Naive thymus-derived CD4-positive, alpha-beta T cell (primary cell): ENCODE measurements at regions of chr21 and their contacts with region 1.

Region 1: GRCh38 chr21:46323227-46324128 is at the start of gene C21orf58:
- DNase-seq: peak; percentile 96 to 99 (median 98)
- ATAC-seq: peak; percentile 90
- H3K4me3 ChIP-seq: peak within 1 kb of the TSS; percentile 98
- H3K4me3 Mint-ChIP-seq: peak within 1 kb of the TSS; percentile 90 to 98 (median 96)
- H3K27ac ChIP-seq: peak within 1 kb of the TSS; percentile 97
- H3K27ac Mint-ChIP-seq: peak within 1 kb of the TSS; percentile 91 to 99 (median 97)
- H3K4me1 ChIP-seq: peaks cover 0 to 16% of the 10 kb centered on the region in 2 donors
- H3K4me1 Mint-ChIP-seq: peaks cover 14 to 44% (median 33%) of the 10 kb centered on the region in 7 donors
- H3K27me3 ChIP-seq: no peaks in the 10 kb centered on the region
- H3K27me3 Mint-ChIP-seq: no peaks in the 10 kb centered on the region
- total RNA-seq, gene C21orf58: 5.0 to 38.4 (median 9.0) TPM

Region 2: DNA sequence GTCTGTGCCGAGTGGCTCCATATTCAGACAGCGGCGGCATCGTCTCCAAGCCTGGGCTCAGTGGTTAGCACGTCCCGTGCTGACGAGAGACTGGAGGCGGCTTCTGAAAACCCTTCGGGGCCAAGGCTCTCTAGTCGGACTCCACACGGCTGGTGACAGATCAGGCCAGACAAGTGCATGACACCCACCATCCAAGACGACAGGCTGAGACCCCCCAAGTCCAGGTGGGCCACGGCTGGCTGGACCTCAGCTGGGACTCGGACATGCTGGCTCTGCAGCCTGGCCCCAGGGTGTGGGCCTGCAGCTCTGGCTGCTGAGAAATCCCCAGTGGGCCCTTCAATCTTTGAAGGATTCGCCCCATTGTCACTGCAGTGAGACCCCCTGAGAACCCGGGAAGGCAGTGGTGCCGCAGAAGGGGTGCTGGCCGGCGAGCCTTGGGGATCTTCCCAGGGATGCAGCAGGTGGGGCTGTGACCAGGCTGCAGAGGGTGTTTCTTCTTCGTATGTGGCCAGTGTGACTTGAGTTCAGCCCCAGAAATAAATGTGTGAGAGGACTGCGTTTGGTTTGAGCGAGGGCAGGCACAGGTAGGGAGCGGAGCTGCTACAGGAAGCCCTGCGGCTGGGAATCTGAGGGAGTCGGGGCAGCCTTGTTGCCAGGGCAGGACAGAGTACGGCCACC is 765.3 kb before region 1 on chr21:
- CTCF ChIA-PET with region 1: no interaction called
- POLR2A ChIA-PET with region 1: no interaction called
- intact Hi-C with region 1: no loop called
- DNase-seq: no peak
- ATAC-seq: no peak
- H3K4me3 ChIP-seq: no peak overlapping the region
- H3K4me3 Mint-ChIP-seq: no peak overlapping the region
- H3K27ac ChIP-seq: no peak overlapping the region
- H3K27ac Mint-ChIP-seq: peak overlapping the region in 3 of 9 donors; percentile 2 to 43 (median 31)
- H3K4me1 ChIP-seq: peaks cover 3 to 5% of the 10 kb centered on the region in 2 donors
- H3K4me1 Mint-ChIP-seq: peaks cover 0 to 8% (median 7%) of the 10 kb centered on the region in 7 donors
- H3K27me3 ChIP-seq: no peaks in the 10 kb centered on the region
- H3K27me3 Mint-ChIP-seq: peaks cover 0 to 17% (median 4%) of the 10 kb centered on the region in 5 donors

Region 3: DNA sequence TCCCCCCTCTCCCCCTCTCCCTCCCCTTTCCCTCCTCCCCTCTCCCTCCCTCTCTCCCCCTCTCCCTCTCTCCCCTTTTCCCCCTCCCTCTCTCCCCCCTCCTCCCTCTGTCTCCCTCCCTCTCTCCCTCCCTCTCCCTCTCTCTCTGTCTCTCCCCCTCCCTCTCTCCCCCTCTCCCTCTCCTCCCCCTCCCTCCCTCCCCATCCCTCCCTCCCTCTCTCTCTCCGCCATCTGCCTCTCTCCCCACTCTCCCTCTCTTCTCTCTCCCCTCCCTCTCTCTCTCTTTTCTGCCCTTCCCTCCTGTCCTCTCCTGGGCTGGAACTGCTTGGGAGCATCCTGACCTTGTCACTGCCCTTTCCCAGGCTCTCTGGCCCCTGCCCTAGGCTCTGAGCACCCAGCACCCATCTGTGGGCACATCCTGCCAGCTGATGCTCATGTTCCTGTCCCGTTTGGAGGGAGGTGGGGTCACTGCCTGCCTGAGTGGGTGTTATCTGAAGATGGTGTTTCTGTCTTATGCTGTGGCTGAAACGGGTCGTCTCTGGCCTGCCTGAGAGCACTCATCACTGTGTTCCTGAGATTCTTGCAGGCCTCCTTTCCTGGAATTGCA is 178.9 kb before region 1 on chr21:
- CTCF ChIA-PET with region 1: interaction called, 9 read pairs
- POLR2A ChIA-PET with region 1: no interaction called
- intact Hi-C with region 1: loop called in 1 of 2 experiments (anchors 1 kb)
- DNase-seq: no peak
- ATAC-seq: no peak
- H3K4me3 ChIP-seq: no peak overlapping the region
- H3K4me3 Mint-ChIP-seq: peak overlapping the region in 5 of 10 donors; percentile 29 to 89 (median 80)
- H3K27ac ChIP-seq: no peak overlapping the region
- H3K27ac Mint-ChIP-seq: peak overlapping the region in 6 of 9 donors; percentile 33 to 92 (median 59)
- H3K4me1 ChIP-seq: no peaks in the 10 kb centered on the region
- H3K4me1 Mint-ChIP-seq: peaks cover 6 to 13% (median 8%) of the 10 kb centered on the region in 7 donors
- H3K27me3 ChIP-seq: no peaks in the 10 kb centered on the region
- H3K27me3 Mint-ChIP-seq: no peaks in the 10 kb centered on the region

Region 4: GRCh38 chr21:46184625-46185555 is 138.6 kb before region 1 on chr21:
- CTCF ChIA-PET with region 1: no interaction called
- POLR2A ChIA-PET with region 1: no interaction called
- intact Hi-C with region 1: loop called in 1 of 2 experiments (anchors 1 kb)
- DNase-seq: peak; percentile 48 to 79 (median 74)
- ATAC-seq: peak; percentile 79
- H3K4me3 ChIP-seq: peak overlapping the region; percentile 67
- H3K4me3 Mint-ChIP-seq: peak overlapping the region; percentile 80 to 92 (median 86)
- H3K27ac ChIP-seq: peak overlapping the region; percentile 68
- H3K27ac Mint-ChIP-seq: peak overlapping the region; percentile 75 to 91 (median 86)
- H3K4me1 ChIP-seq: peaks cover 0 to 5% of the 10 kb centered on the region in 2 donors
- H3K4me1 Mint-ChIP-seq: peaks cover 0 to 16% (median 10%) of the 10 kb centered on the region in 7 donors
- H3K27me3 ChIP-seq: no peaks in the 10 kb centered on the region
- H3K27me3 Mint-ChIP-seq: no peaks in the 10 kb centered on the region

Region 5: DNA sequence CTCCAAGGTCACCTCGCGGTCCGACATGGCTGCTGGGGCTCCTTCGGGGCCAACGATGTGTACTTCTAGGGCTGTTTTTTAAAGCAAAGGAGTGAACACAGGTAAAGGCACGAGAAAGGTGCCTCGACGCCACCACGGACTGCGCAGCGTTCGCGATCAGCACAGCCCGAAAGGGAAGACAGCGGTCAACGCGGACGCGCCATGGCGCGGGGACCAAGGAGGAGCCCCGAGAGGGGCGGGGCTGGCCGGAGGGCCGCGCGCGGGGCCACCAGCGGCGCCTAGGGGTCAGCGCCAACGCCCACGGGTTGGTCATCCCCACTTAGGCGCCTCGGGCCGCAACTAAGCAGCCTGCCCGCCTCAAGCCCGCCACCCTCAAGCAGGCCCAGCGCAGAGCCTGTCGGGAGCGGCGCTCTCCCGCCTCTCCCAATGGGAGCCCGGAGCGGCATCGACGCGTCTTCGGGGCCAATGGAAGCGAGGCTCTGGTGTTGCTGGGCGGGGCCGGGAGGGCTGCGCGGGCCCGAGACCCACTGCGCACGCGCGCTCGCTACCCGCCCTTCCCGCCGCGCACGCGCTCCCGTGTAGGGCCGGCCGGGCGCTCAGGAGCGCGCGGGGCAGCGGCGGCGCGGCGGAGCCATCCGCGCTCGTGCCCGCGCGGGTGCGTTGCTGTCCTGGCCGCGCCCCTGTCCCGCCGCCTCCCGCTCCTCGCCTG is 135.0 kb after region 1 on chr21 and contains the start of gene DIP2A:
- CTCF ChIA-PET with region 1: no interaction called
- POLR2A ChIA-PET with region 1: interaction called, 5 read pairs
- intact Hi-C with region 1: loop called (anchors 1 to 5 kb)
- DNase-seq: peak; percentile 93 to 97 (median 96)
- ATAC-seq: peak; percentile 98
- H3K4me3 ChIP-seq: peak within 1 kb of the TSS; percentile 81
- H3K4me3 Mint-ChIP-seq: peak within 1 kb of the TSS; percentile 86 to 96 (median 92)
- H3K27ac ChIP-seq: peak within 1 kb of the TSS; percentile 94
- H3K27ac Mint-ChIP-seq: peak within 1 kb of the TSS; percentile 85 to 97 (median 91)
- H3K4me1 ChIP-seq: peaks cover 4 to 17% of the 10 kb centered on the region in 2 donors
- H3K4me1 Mint-ChIP-seq: peaks cover 28 to 62% (median 48%) of the 10 kb centered on the region in 7 donors
- H3K27me3 ChIP-seq: no peaks in the 10 kb centered on the region
- H3K27me3 Mint-ChIP-seq: no peaks in the 10 kb centered on the region
- total RNA-seq, gene DIP2A: 54.7 to 118 (median 108) TPM

Region 6: GRCh38 chr21:46559291-46559983 is 236.0 kb after region 1 on chr21:
- CTCF ChIA-PET with region 1: no interaction called
- POLR2A ChIA-PET with region 1: no interaction called
- intact Hi-C with region 1: loop called in 1 of 2 experiments (anchors 2 kb)
- DNase-seq: peak; percentile 29 to 85 (median 76)
- ATAC-seq: peak; percentile 85
- H3K4me3 ChIP-seq: peak overlapping the region; percentile 24
- H3K4me3 Mint-ChIP-seq: peak overlapping the region; percentile 76 to 91 (median 82)
- H3K27ac ChIP-seq: peak overlapping the region; percentile 84
- H3K27ac Mint-ChIP-seq: peak overlapping the region; percentile 95 to 99 (median 97)
- H3K4me1 ChIP-seq: peaks cover 37 to 85% of the 10 kb centered on the region in 2 donors
- H3K4me1 Mint-ChIP-seq: peaks cover 39 to 95% (median 78%) of the 10 kb centered on the region in 7 donors
- H3K27me3 ChIP-seq: no peaks in the 10 kb centered on the region
- H3K27me3 Mint-ChIP-seq: no peaks in the 10 kb centered on the region